IMR-90 (cell line): ENCODE measurements at regions of chr15 and their contacts with region 1.

Region 1: DNA sequence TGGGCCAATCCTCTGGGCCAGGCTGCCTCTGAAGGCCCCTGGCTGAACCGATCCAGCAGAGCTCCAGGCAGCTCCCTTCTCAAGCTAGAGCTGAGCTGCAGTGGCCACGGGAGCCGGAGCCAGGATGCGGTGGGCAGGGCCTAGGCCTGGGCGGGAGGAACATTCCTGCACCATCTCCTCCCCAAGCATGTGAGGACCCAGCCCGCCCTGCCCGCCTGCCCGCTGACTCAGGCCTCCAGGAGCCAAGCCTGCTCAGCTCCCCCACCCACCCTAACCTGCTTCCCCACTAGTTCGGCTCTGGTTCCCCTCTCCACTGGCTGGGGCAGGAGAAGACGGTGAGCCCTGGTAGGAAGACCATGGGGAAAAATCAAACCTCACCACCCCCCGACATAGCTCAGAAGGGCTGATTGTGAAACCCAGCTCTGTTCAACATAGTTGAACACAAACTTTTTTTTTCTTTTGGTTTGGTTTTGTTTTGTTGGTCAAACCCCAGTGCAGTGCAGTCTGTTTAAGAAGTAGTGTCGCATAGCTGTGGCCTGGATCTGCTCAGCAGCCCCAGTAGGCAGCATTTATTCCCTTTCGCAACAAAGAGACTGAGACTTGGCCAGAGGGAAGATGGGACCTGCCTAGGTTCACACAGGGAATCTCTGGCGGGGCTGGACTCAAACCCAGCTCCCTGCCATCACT is 13.5 kb downstream of the SNX33 start:
- DNase-seq: peak; percentile 91
- ATAC-seq: peak; percentile 98
- H3K4me3 ChIP-seq: no peak overlapping the region
- H3K27ac ChIP-seq: peak overlapping the region; percentile 86
- H3K4me1 ChIP-seq: peaks cover 20% of the 10 kb centered on the region
- H3K27me3 ChIP-seq: no peaks in the 10 kb centered on the region
- CTCF ChIP-seq: no peak
- POLR2A ChIP-seq: peak; percentile 80; the same call in 1 of the 2 replicates
- RAD21 ChIP-seq: no peak

Region 2: GRCh38 chr15:75508840-75509532 is 152.2 kb before region 1 on chr15:
- CTCF ChIA-PET with region 1: no interaction called
- POLR2A ChIA-PET with region 1: no interaction called
- dilution Hi-C with region 1: no loop called
- in situ Hi-C with region 1: no loop called
- intact Hi-C with region 1: no loop called
- DNase-seq: peak; percentile 65
- ATAC-seq: peak; percentile 66
- H3K4me3 ChIP-seq: no peak overlapping the region
- H3K27ac ChIP-seq: no peak overlapping the region
- H3K4me1 ChIP-seq: no peaks in the 10 kb centered on the region
- H3K27me3 ChIP-seq: no peaks in the 10 kb centered on the region
- CTCF ChIP-seq: peak; percentile 58
- POLR2A ChIP-seq: no peak
- RAD21 ChIP-seq: peak; percentile 65

Region 3: GRCh38 chr15:75639709-75640482 is 21.3 kb before region 1 on chr15 and contains the start of gene IMP3:
- CTCF ChIA-PET with region 1: no interaction called
- POLR2A ChIA-PET with region 1: no interaction called
- dilution Hi-C with region 1: no loop called
- in situ Hi-C with region 1: no loop called
- intact Hi-C with region 1: loop called (anchors 2 kb)
- DNase-seq: peak; percentile 95
- ATAC-seq: peak; percentile 96
- H3K4me3 ChIP-seq: peak within 1 kb of the TSS; percentile 77
- H3K27ac ChIP-seq: peak within 1 kb of the TSS; percentile 92
- H3K4me1 ChIP-seq: peaks cover 4% of the 10 kb centered on the region; the same call in 1 of the 2 replicates
- H3K27me3 ChIP-seq: no peaks in the 10 kb centered on the region
- CTCF ChIP-seq: no peak
- POLR2A ChIP-seq: peak; percentile 94
- RAD21 ChIP-seq: no peak
- total RNA-seq, gene IMP3: 42.1 and 84.7 TPM in 2 replicates

Region 4: DNA sequence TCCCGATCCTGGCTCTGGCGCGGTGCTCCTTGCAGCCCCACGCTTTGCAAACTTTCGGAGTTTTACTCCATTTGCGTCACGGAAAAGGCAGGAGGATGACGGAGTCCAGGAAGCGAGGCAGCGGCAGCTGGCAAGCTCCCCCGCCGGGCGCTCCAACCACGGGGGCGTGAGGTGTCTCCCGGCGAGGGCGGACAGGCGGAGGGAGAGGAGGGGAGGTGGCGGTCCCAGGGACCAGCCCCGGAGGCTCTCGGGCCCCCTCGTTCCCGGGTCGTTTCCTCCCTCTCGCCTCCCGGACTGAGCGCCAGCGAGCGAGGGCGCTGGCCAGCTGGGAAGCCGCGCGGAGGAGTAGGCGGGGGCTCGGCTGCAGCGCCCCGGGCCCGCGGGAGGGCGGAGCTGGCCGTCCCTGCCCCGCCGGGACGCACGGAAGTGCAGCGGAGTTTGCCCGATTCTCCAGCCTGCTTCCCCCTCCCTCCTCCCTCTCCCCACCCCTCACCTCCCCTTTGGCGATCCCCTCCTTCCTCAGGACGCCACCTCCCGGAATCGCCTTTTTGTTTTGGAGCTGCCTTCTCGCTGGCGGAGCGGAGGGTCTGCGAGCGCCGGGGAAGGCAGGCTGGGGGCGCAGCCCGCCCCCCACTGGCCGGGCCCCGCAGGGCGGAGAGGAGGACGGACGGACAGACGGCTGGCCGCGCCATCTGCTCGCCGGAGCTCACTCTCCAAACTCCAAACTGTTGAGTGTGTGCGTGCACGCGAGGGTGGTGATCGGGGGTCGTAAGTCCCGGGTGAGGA is 13.7 kb before region 1 on chr15 and contains the start of gene SNX33:
- CTCF ChIA-PET with region 1: no interaction called
- POLR2A ChIA-PET with region 1: interaction called, 3 read pairs
- dilution Hi-C with region 1: no loop called
- in situ Hi-C with region 1: no loop called
- intact Hi-C with region 1: loop called (anchors 1 kb)
- DNase-seq: peak; percentile 89
- ATAC-seq: peak; percentile 81
- H3K4me3 ChIP-seq: peak within 1 kb of the TSS; percentile 88
- H3K27ac ChIP-seq: peak within 1 kb of the TSS; percentile 94
- H3K4me1 ChIP-seq: peaks cover 37% of the 10 kb centered on the region
- H3K27me3 ChIP-seq: no peaks in the 10 kb centered on the region
- CTCF ChIP-seq: peak; percentile 49
- POLR2A ChIP-seq: peak; percentile 84
- RAD21 ChIP-seq: peak; percentile 24; the same call in 1 of the 2 replicates
- total RNA-seq, gene SNX33: 11.9 and 12.7 TPM in 2 replicates

Region 5: DNA sequence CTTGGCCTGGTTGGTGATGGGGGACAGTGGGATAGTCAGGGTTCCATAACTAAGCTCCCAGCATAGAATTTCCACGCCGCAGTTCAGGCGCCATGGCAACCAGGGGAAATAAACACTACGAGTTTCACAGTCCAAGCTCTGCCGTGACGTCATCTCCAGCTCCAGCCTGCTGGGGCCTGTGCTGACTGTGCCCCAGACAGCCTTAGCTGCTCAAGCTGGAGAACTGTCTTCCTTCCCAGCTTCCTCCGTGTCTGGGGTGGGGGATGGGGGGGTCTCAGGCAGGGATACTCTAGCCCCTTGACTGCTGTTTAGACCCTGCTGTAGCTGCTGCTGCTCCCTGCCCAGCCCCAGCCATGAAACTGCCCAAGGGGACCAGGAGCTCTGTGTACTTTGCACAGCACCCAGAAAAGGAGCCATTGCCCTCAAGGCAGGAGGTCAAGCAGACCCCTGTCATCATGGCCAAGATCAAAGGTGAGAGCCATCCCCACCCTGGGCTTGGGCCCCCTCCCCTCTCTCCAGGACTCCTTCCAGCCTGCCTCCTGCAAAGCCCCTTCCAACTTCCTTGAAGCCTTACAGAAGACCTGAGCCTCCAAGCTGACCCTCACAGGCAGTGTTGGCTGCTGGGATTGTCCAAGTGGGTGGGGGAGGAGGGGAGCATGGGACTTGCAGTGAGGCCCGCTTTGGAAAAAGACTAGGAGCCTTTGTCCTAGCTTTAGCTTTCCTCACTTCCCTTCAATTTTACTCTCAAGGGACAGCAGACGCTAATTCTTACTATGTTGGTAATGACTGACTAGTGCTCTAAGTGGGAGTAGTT is 62.8 kb after region 1 on chr15:
- CTCF ChIA-PET with region 1: no interaction called
- POLR2A ChIA-PET with region 1: no interaction called
- dilution Hi-C with region 1: no loop called
- in situ Hi-C with region 1: loop called (anchors 10 kb)
- intact Hi-C with region 1: no loop called
- DNase-seq: peak; percentile 96
- ATAC-seq: peak; percentile 97
- H3K4me3 ChIP-seq: no peak overlapping the region
- H3K27ac ChIP-seq: peak overlapping the region; percentile 54; the same call in 1 of the 2 replicates
- H3K4me1 ChIP-seq: peaks cover 10% of the 10 kb centered on the region
- H3K27me3 ChIP-seq: no peaks in the 10 kb centered on the region
- CTCF ChIP-seq: no peak
- POLR2A ChIP-seq: peak; percentile 85
- RAD21 ChIP-seq: peak; percentile 23

Region 6: GRCh38 chr15:75842722-75843551 is 181.7 kb after region 1 on chr15 and contains the start of gene UBE2Q2:
- CTCF ChIA-PET with region 1: no interaction called
- POLR2A ChIA-PET with region 1: no interaction called
- dilution Hi-C with region 1: no loop called
- in situ Hi-C with region 1: no loop called
- intact Hi-C with region 1: no loop called
- DNase-seq: peak; percentile 62
- ATAC-seq: peak; percentile 68
- H3K4me3 ChIP-seq: peak within 1 kb of the TSS; percentile 99
- H3K27ac ChIP-seq: peak within 1 kb of the TSS; percentile 91
- H3K4me1 ChIP-seq: peaks cover 8% of the 10 kb centered on the region
- H3K27me3 ChIP-seq: no peaks in the 10 kb centered on the region
- CTCF ChIP-seq: no peak
- POLR2A ChIP-seq: peak; percentile 66
- RAD21 ChIP-seq: no peak
- total RNA-seq, gene UBE2Q2: 28.9 and 44.2 TPM in 2 replicates